Naive thymus-derived CD4-positive, alpha-beta T cell (primary cell): ENCODE measurements at regions of chr17 and their contacts with region 1.

Region 1: DNA sequence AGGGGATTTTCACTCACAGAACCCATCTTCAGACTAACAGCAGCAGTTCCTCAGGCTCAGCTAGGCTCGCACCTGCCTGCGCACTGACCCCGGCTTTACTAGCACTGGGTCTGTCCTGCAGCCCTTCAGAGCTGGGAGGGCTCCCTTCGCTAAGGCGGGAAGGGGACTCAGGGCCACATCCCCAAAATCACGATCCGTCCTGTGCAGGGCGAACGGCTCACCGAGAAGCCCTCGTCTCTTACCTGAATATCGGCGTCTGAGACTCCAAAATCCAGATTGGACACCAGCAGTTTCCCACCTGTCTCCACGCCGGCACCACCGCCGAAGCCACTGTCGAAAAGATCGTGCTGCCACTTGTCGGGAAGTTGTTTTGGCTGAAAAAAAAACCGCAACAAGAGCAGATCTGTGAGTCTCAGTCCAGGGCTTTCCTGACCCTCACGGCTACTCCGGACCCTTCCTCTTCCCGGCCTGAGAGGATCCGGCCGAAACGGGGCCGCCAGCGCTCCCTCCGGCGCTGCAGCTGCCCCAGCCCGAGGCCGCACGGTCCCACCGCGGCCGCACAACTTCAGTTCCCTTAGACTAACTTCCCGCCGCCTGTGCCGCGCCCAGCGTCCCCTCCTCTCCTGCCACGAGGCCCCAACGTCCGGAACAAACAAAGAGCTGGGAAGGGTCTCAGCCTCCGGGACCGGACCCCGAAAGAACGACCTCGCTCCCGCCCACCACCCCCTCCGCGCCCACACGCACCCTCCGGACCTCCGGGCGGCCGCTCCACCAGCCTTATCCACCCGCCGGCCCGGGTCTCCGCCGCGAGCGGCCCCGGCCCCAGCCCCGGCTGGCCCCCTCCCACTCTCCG is 713 bp downstream of the ALYREF start:
- DNase-seq: peak in 1 of 9 donors; percentile 47
- ATAC-seq: no peak
- H3K4me3 ChIP-seq: peak overlapping the region; percentile 79
- H3K4me3 Mint-ChIP-seq: peak overlapping the region; percentile 78 to 96 (median 87)
- H3K27ac ChIP-seq: peak overlapping the region; percentile 82
- H3K27ac Mint-ChIP-seq: peak overlapping the region; percentile 84 to 97 (median 95)
- H3K4me1 ChIP-seq: peaks cover 16 to 20% of the 10 kb centered on the region in 2 donors
- H3K4me1 Mint-ChIP-seq: peaks cover 0 to 32% (median 19%) of the 10 kb centered on the region in 7 donors
- H3K27me3 ChIP-seq: no peaks in the 10 kb centered on the region
- H3K27me3 Mint-ChIP-seq: no peaks in the 10 kb centered on the region

Region 2: GRCh38 chr17:81917565-81918332 is 27.1 kb after region 1 on chr17 and contains the start of gene SIRT7:
- CTCF ChIA-PET with region 1: no interaction called
- POLR2A ChIA-PET with region 1: interaction called, 10 read pairs
- intact Hi-C with region 1: loop called in 1 of 2 experiments (anchors 2 kb)
- DNase-seq: peak; percentile 69 to 83 (median 78)
- ATAC-seq: peak; percentile 93
- H3K4me3 ChIP-seq: peak within 1 kb of the TSS; percentile 49
- H3K4me3 Mint-ChIP-seq: peak within 1 kb of the TSS; percentile 81 to 92 (median 88)
- H3K27ac ChIP-seq: peak within 1 kb of the TSS; percentile 80
- H3K27ac Mint-ChIP-seq: peak within 1 kb of the TSS; percentile 82 to 90 (median 85)
- H3K4me1 ChIP-seq: peaks cover 13 to 20% of the 10 kb centered on the region in 2 donors
- H3K4me1 Mint-ChIP-seq: peaks cover 14 to 47% (median 35%) of the 10 kb centered on the region in 7 donors
- H3K27me3 ChIP-seq: no peaks in the 10 kb centered on the region
- H3K27me3 Mint-ChIP-seq: no peaks in the 10 kb centered on the region
- total RNA-seq, gene SIRT7: 56.0 to 81.4 (median 69.7) TPM